CD8-positive, alpha-beta memory T cell (primary cell): ENCODE measurements at regions of chr9 and their contacts with region 1.

Region 1: GRCh38 chr9:99057665-99058625 is 47.0 kb upstream of the TGFBR1 start:
- DNase-seq: peak; percentile 56 to 88 (median 80)
- H3K4me3 ChIP-seq: peak overlapping the region; percentile 80
- H3K4me3 Mint-ChIP-seq: peak overlapping the region; percentile 83 to 93 (median 90)
- H3K27ac ChIP-seq: peak overlapping the region; percentile 51
- H3K27ac Mint-ChIP-seq: peak overlapping the region; percentile 21 to 92 (median 85)
- H3K4me1 ChIP-seq: peaks cover 71% of the 10 kb centered on the region
- H3K4me1 Mint-ChIP-seq: peaks cover 86 to 94% (median 94%) of the 10 kb centered on the region in 3 donors
- H3K27me3 ChIP-seq: no peaks in the 10 kb centered on the region
- H3K27me3 Mint-ChIP-seq: no peaks in the 10 kb centered on the region

Region 2: GRCh38 chr9:98867429-98868168 is 190.3 kb before region 1 on chr9:
- CTCF ChIA-PET with region 1: no interaction called
- POLR2A ChIA-PET with region 1: no interaction called
- DNase-seq: no peak
- H3K4me3 ChIP-seq: no peak overlapping the region
- H3K4me3 Mint-ChIP-seq: no peak overlapping the region
- H3K27ac ChIP-seq: peak overlapping the region; percentile 28
- H3K27ac Mint-ChIP-seq: no peak overlapping the region
- H3K4me1 ChIP-seq: no peaks in the 10 kb centered on the region
- H3K4me1 Mint-ChIP-seq: no peaks in the 10 kb centered on the region
- H3K27me3 ChIP-seq: no peaks in the 10 kb centered on the region
- H3K27me3 Mint-ChIP-seq: peaks cover 7 to 40% of the 10 kb centered on the region in 2 donors

Region 3: GRCh38 chr9:99112750-99113413 is 54.9 kb after region 1 on chr9:
- CTCF ChIA-PET with region 1: interaction called, 15 read pairs
- POLR2A ChIA-PET with region 1: interaction called, 14 read pairs
- DNase-seq: peak in 4 of 5 donors; percentile 31 to 84 (median 73)
- H3K4me3 ChIP-seq: peak overlapping the region; percentile 35
- H3K4me3 Mint-ChIP-seq: peak overlapping the region; percentile 29 to 81 (median 69)
- H3K27ac ChIP-seq: no peak overlapping the region
- H3K27ac Mint-ChIP-seq: peak overlapping the region; percentile 21 to 95 (median 86)
- H3K4me1 ChIP-seq: peaks cover 91% of the 10 kb centered on the region
- H3K4me1 Mint-ChIP-seq: peaks cover 93 to 96% (median 96%) of the 10 kb centered on the region in 3 donors
- H3K27me3 ChIP-seq: no peaks in the 10 kb centered on the region
- H3K27me3 Mint-ChIP-seq: no peaks in the 10 kb centered on the region

Region 4: GRCh38 chr9:99118782-99119466 is 61.0 kb after region 1 on chr9:
- CTCF ChIA-PET with region 1: interaction called, 15 read pairs
- POLR2A ChIA-PET with region 1: interaction called, 14 read pairs
- DNase-seq: peak in 4 of 5 donors; percentile 30 to 75 (median 71)
- H3K4me3 ChIP-seq: peak overlapping the region; percentile 42
- H3K4me3 Mint-ChIP-seq: peak overlapping the region; percentile 3 to 92 (median 81)
- H3K27ac ChIP-seq: no peak overlapping the region
- H3K27ac Mint-ChIP-seq: peak overlapping the region; percentile 21 to 96 (median 91)
- H3K4me1 ChIP-seq: peaks cover 89% of the 10 kb centered on the region
- H3K4me1 Mint-ChIP-seq: peaks cover 90 to 95% (median 95%) of the 10 kb centered on the region in 3 donors
- H3K27me3 ChIP-seq: no peaks in the 10 kb centered on the region
- H3K27me3 Mint-ChIP-seq: no peaks in the 10 kb centered on the region

Region 5: DNA sequence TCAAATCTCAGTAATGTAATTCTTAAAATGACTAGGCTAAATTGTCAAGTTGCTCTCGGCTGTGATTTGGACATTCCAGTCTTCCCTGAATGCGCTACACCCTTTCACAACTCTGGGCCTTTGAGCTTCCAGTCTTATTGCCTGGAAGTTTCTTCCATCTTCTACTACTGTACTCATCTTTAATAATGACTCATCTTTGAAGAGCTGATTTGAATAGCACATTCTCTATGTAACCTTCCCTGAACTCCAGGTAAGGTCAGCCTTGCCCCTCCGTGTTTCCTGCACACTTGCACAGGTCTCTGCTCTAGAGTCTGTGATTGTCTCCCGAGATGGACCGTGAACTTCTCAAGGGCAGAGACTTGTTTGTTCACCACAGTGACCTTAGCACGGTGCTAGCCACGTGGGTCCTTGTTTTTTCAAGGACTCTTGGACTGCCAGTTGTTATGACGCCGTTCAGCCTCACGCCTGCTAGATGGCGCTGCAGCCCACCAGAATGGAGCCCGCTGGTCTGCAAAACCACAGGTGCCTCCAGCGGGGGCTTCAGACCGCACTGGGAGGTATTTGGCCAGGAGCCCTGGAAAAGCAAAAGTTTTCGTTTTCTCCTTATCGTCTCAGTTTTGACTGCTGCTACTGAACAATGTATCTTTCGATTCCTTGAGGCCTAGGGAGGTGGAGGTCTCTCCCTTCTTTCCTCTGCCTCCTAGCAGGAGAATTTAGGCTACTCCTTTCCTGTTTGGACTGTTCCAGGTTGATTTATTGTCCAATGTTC is 208.5 kb after region 1 on chr9:
- CTCF ChIA-PET with region 1: no interaction called
- POLR2A ChIA-PET with region 1: no interaction called
- DNase-seq: peak; percentile 27 to 64 (median 40)
- H3K4me3 ChIP-seq: no peak overlapping the region
- H3K4me3 Mint-ChIP-seq: peak overlapping the region in 4 of 7 donors; percentile 12 to 49 (median 34)
- H3K27ac ChIP-seq: no peak overlapping the region
- H3K27ac Mint-ChIP-seq: peak overlapping the region in 1 of 8 donors; percentile 27
- H3K4me1 ChIP-seq: no peaks in the 10 kb centered on the region
- H3K4me1 Mint-ChIP-seq: peaks cover 9 to 10% (median 10%) of the 10 kb centered on the region in 3 donors
- H3K27me3 ChIP-seq: no peaks in the 10 kb centered on the region
- H3K27me3 Mint-ChIP-seq: peaks cover 0 to 8% of the 10 kb centered on the region in 2 donors